BJ (cell line): ENCODE measurements at regions of chr17 and their contacts with region 1.

Region 1: DNA sequence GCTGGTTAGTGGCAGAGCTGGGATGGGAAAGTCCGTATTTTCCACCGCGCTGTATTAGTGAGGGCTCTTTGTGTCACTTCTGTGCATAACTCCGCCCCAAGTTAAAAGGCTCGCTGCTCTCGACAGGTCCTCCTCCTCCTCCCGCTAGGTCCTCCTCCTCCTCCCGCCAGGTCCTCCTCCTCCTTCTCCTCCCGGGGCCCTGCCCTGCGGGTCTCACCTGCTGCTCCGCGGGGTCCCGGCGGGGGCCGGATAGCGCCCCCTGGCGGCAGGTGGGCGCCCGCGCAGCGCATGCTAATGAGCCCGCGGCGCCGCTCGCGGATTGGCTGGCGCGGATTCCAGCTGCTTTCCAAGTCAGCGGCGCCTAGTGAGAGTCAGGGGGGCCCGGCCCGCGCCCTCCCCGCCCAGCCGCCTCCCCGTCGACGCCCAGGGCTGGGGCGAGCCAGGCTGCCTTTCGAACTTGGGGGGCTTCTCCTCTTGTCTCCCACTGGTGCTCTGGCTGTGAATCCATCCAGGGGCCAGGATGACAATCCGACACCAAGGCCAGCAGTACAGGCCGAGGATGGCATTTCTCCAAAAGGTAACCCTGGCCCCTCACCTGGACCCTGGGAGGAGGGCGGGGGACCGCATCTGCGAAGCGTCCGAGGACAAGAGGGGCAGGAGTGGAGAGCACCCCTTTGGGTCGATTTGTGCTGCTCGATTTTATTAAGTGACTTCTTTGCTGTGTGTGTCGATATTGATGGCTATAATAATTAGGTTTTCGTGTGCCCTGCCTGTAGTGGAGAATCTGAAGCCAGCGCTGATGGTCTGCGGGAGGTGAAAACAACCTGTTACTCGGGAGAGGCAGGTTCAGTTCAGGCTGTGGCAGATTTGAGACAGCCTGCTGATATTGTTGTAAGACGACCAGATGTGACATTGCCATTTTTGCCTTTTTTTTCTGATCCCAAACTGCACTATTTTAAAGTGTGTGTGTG is at the start of gene RGS9:
- DNase-seq: no peak
- H3K4me3 ChIP-seq: peak within 1 kb of the TSS; percentile 40
- H3K27me3 ChIP-seq: peaks cover 10% of the 10 kb centered on the region
- CTCF ChIP-seq: peak; percentile 70
- polyA plus RNA-seq, gene RGS9: 1.5 and 1.6 TPM in 2 replicates

Region 2: GRCh38 chr17:65100316-65101140 is 36.8 kb before region 1 on chr17:
- CTCF ChIA-PET with region 1: interaction called, 26 read pairs
- POLR2A ChIA-PET with region 1: no interaction called
- DNase-seq: no peak
- H3K4me3 ChIP-seq: peak overlapping the region; percentile 43
- H3K27me3 ChIP-seq: no peaks in the 10 kb centered on the region
- CTCF ChIP-seq: peak; percentile 71

Region 3: GRCh38 chr17:65122836-65123756 is 14.2 kb before region 1 on chr17:
- CTCF ChIA-PET with region 1: interaction called, 18 read pairs
- POLR2A ChIA-PET with region 1: no interaction called
- DNase-seq: peak; percentile 33
- H3K4me3 ChIP-seq: peak overlapping the region; percentile 51
- H3K27me3 ChIP-seq: peaks cover 3% of the 10 kb centered on the region
- CTCF ChIP-seq: no peak

Region 4: GRCh38 chr17:65154770-65155621 is 17.7 kb after region 1 on chr17:
- CTCF ChIA-PET with region 1: interaction called, 33 read pairs
- POLR2A ChIA-PET with region 1: no interaction called
- DNase-seq: no peak
- H3K4me3 ChIP-seq: no peak overlapping the region
- H3K27me3 ChIP-seq: peaks cover 5% of the 10 kb centered on the region
- CTCF ChIP-seq: no peak

Region 5: GRCh38 chr17:65185668-65186382 is 48.5 kb after region 1 on chr17:
- CTCF ChIA-PET with region 1: interaction called, 15 read pairs
- POLR2A ChIA-PET with region 1: no interaction called
- DNase-seq: no peak
- H3K4me3 ChIP-seq: no peak overlapping the region
- H3K27me3 ChIP-seq: no peaks in the 10 kb centered on the region
- CTCF ChIP-seq: no peak

Region 6: GRCh38 chr17:65191811-65192740 is 54.8 kb after region 1 on chr17:
- CTCF ChIA-PET with region 1: interaction called, 15 read pairs
- POLR2A ChIA-PET with region 1: no interaction called
- DNase-seq: no peak
- H3K4me3 ChIP-seq: no peak overlapping the region
- H3K27me3 ChIP-seq: no peaks in the 10 kb centered on the region
- CTCF ChIP-seq: no peak